ENCODE measurements at regions of chr4 and their contacts with region 1.

Region 1: DNA sequence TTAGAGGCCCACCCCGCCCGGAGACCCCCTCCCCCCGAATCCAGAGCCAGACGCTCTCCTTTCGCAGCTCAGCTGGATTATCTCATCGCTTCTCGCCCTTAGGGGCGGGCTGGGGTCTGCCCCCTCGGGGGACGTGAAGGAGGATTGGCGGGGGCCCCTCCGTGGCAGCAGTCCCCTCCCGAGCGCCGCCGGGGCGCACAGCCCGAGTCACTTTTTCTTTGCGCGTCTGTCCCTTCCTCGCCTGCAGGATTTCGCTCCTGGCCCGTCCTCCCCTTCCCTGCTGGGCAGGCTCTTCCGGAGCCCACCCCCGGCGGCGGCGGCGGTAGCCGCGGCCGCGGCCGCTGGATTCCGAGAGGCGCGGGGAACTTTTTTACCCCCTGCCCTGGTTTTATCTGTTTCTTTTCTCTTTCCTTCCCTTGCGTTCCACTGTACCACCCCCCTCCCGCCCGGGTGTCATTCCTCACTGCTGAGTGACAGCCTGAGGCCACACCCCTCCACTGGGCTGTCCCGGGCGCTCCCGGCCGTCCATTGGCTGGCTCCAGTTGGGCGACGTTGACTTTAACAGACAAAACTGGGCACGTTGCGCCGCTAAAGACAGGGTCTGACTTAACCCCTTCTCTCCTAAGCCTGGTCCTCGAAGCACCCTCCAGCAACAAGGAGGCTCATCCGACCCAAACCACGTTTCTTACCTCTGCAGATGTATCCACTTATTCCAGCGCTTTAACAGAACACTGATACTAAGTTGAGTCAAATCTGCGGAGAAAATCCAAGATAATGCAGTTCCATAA is 492 bp upstream of the NKX3-2 start:
- DNase-seq: peak; percentile 49 to 82 (median 67)
- ATAC-seq: peak; percentile 75 to 84 (median 80)
- H3K4me3 ChIP-seq: peak overlapping the region; percentile 12 to 67 (median 40)
- H3K27ac ChIP-seq: peak overlapping the region in 1 of 4 donors; percentile 11
- H3K4me1 ChIP-seq: peaks cover 0 to 16% (median 9%) of the 10 kb centered on the region in 3 donors
- H3K27me3 ChIP-seq: peaks cover 12 to 69% (median 21%) of the 10 kb centered on the region in 4 donors
- CTCF ChIP-seq: no peak

Region 2: GRCh38 chr4:12729384-12729783 is 815.4 kb before region 1 on chr4:
- intact Hi-C with region 1: loop called in 1 of 3 experiments (anchors 5 kb)
- DNase-seq: no peak
- ATAC-seq: peak in 2 of 4 donors; percentile 38 to 59
- H3K4me3 ChIP-seq: no peak overlapping the region
- H3K27ac ChIP-seq: no peak overlapping the region
- H3K4me1 ChIP-seq: no peaks in the 10 kb centered on the region
- H3K27me3 ChIP-seq: no peaks in the 10 kb centered on the region
- CTCF ChIP-seq: peak in 3 of 4 donors; percentile 20 to 33 (median 27)

Region 3: DNA sequence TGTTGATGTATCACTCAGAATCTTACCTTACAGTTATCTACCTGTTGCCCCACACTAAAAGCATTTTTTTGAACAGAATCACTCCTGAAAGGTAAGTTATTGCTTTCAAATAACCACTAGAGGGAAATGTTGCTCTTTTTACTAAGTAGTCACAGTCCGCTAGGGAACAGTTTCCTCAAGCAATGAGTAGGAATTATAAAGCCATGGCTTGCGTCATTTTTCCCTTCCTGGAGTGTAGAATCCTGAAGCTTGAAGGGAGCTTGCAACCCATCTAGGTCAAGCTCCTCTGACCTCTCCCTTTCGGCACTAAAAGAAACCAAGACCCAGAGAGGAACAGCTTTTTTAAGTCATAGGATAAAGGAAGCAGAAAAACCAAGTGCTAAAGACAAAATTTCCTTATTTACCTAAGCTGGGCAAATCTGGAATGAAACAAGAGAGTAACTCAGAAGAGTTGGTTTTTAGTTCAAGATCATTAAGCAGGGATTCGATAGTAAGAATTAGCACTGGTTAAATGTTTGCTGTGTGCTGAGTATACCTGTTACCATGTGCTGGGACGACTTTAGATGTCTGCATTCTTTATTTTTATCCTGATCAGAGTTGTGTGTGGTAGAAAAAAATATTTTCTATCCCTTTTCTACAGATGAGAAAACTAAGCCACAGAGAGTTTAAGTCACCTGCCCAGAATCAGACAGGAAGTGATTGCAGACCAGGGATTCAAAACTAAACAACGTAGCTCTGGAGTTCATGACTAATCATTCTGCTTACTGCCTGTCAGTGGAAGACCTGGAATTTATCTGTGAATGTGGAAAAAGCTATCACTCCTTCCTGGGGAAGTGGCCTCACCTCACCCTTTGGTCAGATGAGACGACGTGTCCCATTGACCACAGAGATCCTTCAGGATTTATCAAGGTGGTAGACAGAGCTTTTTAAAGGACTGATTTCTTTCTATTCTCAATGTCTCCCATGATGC is 692.2 kb before region 1 on chr4:
- intact Hi-C with region 1: loop called in 2 of 3 experiments (anchors 5 to 10 kb)
- DNase-seq: peak in 1 of 6 donors; percentile 9
- ATAC-seq: peak; percentile 74 to 97 (median 95)
- H3K4me3 ChIP-seq: no peak overlapping the region
- H3K27ac ChIP-seq: no peak overlapping the region
- H3K4me1 ChIP-seq: no peaks in the 10 kb centered on the region
- H3K27me3 ChIP-seq: peaks cover 0 to 14% (median 0%) of the 10 kb centered on the region in 4 donors
- CTCF ChIP-seq: peak; percentile 16 to 57 (median 47)

Region 4: GRCh38 chr4:13815231-13815630 is 270.4 kb after region 1 on chr4:
- intact Hi-C with region 1: no loop called
- DNase-seq: no peak
- ATAC-seq: no peak
- H3K4me3 ChIP-seq: no peak overlapping the region
- H3K27ac ChIP-seq: no peak overlapping the region
- H3K4me1 ChIP-seq: no peaks in the 10 kb centered on the region
- H3K27me3 ChIP-seq: no peaks in the 10 kb centered on the region
- CTCF ChIP-seq: no peak